ENCODE measurements at regions of chr1 and their contacts with region 1.

Region 1: DNA sequence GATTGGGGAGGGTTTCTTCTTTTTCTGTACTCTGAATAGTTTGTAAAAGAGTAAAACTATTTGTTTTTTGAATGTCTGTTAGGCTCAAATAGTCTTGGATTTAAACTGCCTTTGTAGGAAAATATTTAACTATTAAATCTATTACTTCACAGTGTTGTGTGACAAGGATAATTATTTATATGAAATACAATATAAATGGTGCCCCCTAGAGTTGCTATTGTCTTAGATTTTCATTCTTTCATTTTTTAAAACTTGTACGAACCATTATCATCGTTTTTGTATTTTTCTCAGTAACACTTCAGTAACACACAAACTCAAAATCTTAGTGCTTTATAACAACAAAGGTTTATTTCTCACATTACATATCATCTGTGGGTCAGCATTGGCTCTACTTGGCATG is 37.4 kb downstream of the C1orf185 start:
- DNase-seq: no peak
- H3K4me3 ChIP-seq: no peak overlapping the region
- H3K27ac ChIP-seq: no peak overlapping the region
- H3K4me1 ChIP-seq: no peaks in the 10 kb centered on the region
- H3K27me3 ChIP-seq: no peaks in the 10 kb centered on the region
- CTCF ChIP-seq: no peak
- EP300 ChIP-seq: no peak
- POLR2A ChIP-seq: no peak

Region 2: GRCh38 chr1:51115714-51116404 is 23.6 kb before region 1 on chr1:
- intact Hi-C with region 1: loop called in 1 of 4 experiments (anchors 2 kb)
- DNase-seq: no peak
- H3K4me3 ChIP-seq: no peak overlapping the region
- H3K27ac ChIP-seq: no peak overlapping the region
- H3K4me1 ChIP-seq: no peaks in the 10 kb centered on the region
- H3K27me3 ChIP-seq: no peaks in the 10 kb centered on the region
- CTCF ChIP-seq: no peak
- EP300 ChIP-seq: no peak
- POLR2A ChIP-seq: no peak

Measured in ovary (tissue), 10 donors.